ENCODE measurements at regions of chr2 and their contacts with region 1.

Region 1: GRCh38 chr2:54330162-54330925 is 74.3 kb upstream of the TSPYL6 start:
- DNase-seq: peak; percentile 96
- H3K4me3 ChIP-seq: peak overlapping the region; percentile 50 to 51
- H3K27ac ChIP-seq: peak overlapping the region; percentile 86
- H3K4me1 ChIP-seq: no peaks in the 10 kb centered on the region
- H3K27me3 ChIP-seq: no peaks in the 10 kb centered on the region
- CTCF ChIP-seq: no peak
- POLR2A ChIP-seq: peak; percentile 83

Region 2: GRCh38 chr2:54115284-54116137 is 214.8 kb before region 1 on chr2 and contains the start of gene ACYP2:
- intact Hi-C with region 1: loop called (anchors 5 kb)
- DNase-seq: peak; percentile 93
- H3K4me3 ChIP-seq: peak within 1 kb of the TSS; percentile 71 to 80
- H3K27ac ChIP-seq: peak within 1 kb of the TSS; percentile 98 to 100
- H3K4me1 ChIP-seq: no peaks in the 10 kb centered on the region
- H3K27me3 ChIP-seq: no peaks in the 10 kb centered on the region
- CTCF ChIP-seq: peak in 3 of 4 experiments; percentile 7 to 38 (median 31)
- POLR2A ChIP-seq: peak; percentile 68
- total RNA-seq, gene ACYP2: 30.6 to 39.7 TPM

Region 3: DNA sequence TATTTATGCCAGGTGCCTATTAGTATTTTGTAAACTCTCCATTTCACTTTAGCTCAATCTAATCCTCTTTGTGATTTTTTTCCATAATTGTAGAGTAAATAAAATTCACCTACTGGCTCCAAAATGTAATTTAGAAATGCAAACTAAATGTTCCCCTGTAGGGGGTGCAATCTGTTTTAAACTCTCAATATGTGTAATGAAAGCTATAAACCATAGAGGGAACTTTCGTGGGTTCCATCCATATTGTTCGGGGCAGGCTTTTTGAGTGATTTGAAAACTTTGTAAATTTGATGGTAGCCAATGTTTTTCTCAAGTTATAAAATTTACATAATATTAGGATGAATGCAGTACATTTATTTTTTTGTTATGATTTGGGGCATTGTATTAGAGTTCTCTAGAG is 123.7 kb before region 1 on chr2:
- intact Hi-C with region 1: loop called (anchors 10 kb)
- DNase-seq: no peak
- H3K4me3 ChIP-seq: no peak overlapping the region
- H3K27ac ChIP-seq: no peak overlapping the region
- H3K4me1 ChIP-seq: peaks cover 4% of the 10 kb centered on the region
- H3K27me3 ChIP-seq: no peaks in the 10 kb centered on the region
- CTCF ChIP-seq: peak in 3 of 4 experiments; percentile 49 to 55 (median 51)
- POLR2A ChIP-seq: no peak

Region 4: GRCh38 chr2:54455563-54456361 is 125.4 kb after region 1 on chr2 and contains the start of gene SPTBN1:
- intact Hi-C with region 1: loop called (anchors 5 kb)
- DNase-seq: peak; percentile 90
- H3K4me3 ChIP-seq: peak within 1 kb of the TSS; percentile 89 to 93
- H3K27ac ChIP-seq: peak within 1 kb of the TSS; percentile 94 to 96
- H3K4me1 ChIP-seq: peaks cover 9% of the 10 kb centered on the region
- H3K27me3 ChIP-seq: no peaks in the 10 kb centered on the region
- CTCF ChIP-seq: peak in 1 of 4 experiments; percentile 13
- POLR2A ChIP-seq: peak; percentile 41
- total RNA-seq, gene SPTBN1: 146 to 348 TPM

Region 5: DNA sequence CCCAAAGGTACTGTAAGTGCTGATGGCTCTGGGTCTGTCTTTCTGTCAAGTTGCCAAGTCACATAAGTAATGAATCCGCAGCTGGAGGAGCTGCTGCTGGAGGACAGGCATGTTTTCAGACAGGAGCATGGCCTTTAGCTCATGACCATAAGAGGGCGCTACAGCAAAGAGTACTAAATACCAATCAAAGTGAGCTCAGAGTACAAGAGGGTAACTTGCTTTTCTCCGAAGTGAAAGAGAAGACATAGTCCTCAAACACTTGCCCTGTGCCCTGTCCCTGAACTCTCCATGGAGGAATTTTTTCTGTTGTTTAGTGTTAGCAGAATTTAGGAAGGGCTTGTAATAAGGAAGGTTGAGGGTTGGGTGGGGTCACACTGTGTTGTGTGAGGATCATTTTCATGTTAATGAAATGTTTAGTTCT is 335.1 kb after region 1 on chr2:
- intact Hi-C with region 1: no loop called
- DNase-seq: no peak
- H3K4me3 ChIP-seq: no peak overlapping the region
- H3K27ac ChIP-seq: peak overlapping the region; percentile 70 to 71
- H3K4me1 ChIP-seq: peaks cover 32% of the 10 kb centered on the region
- H3K27me3 ChIP-seq: no peaks in the 10 kb centered on the region
- CTCF ChIP-seq: peak in 3 of 4 experiments; percentile 11 to 31 (median 25)
- POLR2A ChIP-seq: no peak

Region 6: DNA sequence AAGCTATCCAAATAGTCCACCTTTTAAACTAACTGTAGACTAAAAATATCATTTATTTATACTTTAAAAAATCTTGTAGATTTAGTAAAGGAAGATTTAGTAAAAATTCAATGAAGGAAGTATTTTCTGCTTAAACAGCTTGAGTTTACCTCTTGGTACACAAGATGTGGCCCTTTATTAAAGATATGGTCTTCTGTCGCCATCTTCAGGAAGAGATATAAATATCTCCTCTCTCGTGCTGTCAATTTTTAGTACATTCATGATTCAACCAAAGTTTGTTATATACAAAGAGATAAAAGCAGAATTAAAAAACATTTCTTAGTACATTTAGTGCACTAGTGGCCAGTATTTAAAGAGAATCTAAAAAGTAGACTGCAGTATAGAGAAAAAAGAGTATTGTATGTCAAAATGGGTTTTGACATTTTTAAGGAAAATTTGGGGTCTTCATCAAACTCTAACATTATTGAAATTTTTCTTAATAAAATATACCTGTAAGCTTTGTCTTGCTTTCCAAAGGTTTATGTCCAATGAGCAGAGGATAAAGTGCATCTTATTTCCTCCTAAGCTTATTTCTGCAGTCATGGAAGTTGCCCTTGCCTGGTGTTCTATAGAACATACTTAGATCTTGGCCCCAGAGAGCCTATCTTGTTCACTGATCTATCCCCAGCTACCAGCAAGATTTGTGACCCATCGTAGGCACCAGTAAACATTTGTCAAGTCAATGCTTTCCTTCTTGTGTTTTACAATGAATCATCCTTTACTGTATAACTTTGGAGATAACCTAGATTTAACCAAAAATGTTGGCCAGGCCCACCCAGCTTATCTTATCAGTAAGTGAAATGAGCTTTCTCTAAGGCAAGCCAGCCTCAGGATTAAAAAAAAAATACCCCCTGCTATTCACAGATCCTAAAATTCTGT is 374.6 kb after region 1 on chr2:
- intact Hi-C with region 1: loop called (anchors 10 kb)
- DNase-seq: no peak
- H3K4me3 ChIP-seq: no peak overlapping the region
- H3K27ac ChIP-seq: no peak overlapping the region
- H3K4me1 ChIP-seq: no peaks in the 10 kb centered on the region
- H3K27me3 ChIP-seq: no peaks in the 10 kb centered on the region
- CTCF ChIP-seq: peak in 3 of 4 experiments; percentile 48 to 83 (median 74)
- POLR2A ChIP-seq: no peak